K562 (cell line): ENCODE measurements at regions of chr1 and their contacts with region 1.

Region 1: GRCh38 chr1:45521398-45522323 is at the start of gene PRDX1:
- DNase-seq: peak; percentile 97 to 99 (median 98)
- ATAC-seq: peak; percentile 92
- H3K4me3 ChIP-seq: peak within 1 kb of the TSS; percentile 96
- H3K27ac ChIP-seq: peak within 1 kb of the TSS; percentile 87
- H3K4me1 ChIP-seq: peaks cover 25 to 29% of the 10 kb centered on the region in 2 experiments
- H3K27me3 ChIP-seq: no peaks in the 10 kb centered on the region
- CTCF ChIP-seq: peak in 2 of 3 experiments; percentile 38 to 39; a peak in 4 of 6 replicates
- EP300 ChIP-seq: peak; percentile 66; the same call in 1 of the 2 replicates
- POLR2A ChIP-seq: peak; percentile 100
- RAD21 ChIP-seq: peak; percentile 7 to 18
- polyA plus RNA-seq, gene PRDX1: 2,282 to 2,388 TPM

Region 2: GRCh38 chr1:45246760-45247159 is 274.9 kb before region 1 on chr1:
- CTCF ChIA-PET with region 1: no interaction called
- POLR2A ChIA-PET with region 1: no interaction called
- in situ Hi-C with region 1: no loop called
- intact Hi-C with region 1: no loop called
- DNase-seq: no peak
- ATAC-seq: no peak
- H3K4me3 ChIP-seq: no peak overlapping the region
- H3K27ac ChIP-seq: no peak overlapping the region
- H3K4me1 ChIP-seq: no peaks in the 10 kb centered on the region; a peak in 1 of 5 replicates
- H3K27me3 ChIP-seq: peaks cover 2 to 6% of the 10 kb centered on the region in 2 experiments; a peak in 3 of 5 replicates
- CTCF ChIP-seq: no peak
- EP300 ChIP-seq: no peak
- POLR2A ChIP-seq: no peak
- RAD21 ChIP-seq: no peak

Region 3: GRCh38 chr1:45348716-45349677 is 172.7 kb before region 1 on chr1:
- CTCF ChIA-PET with region 1: no interaction called
- POLR2A ChIA-PET with region 1: interaction called, 16 read pairs
- in situ Hi-C with region 1: no loop called
- intact Hi-C with region 1: no loop called
- DNase-seq: no peak
- ATAC-seq: no peak
- H3K4me3 ChIP-seq: no peak overlapping the region
- H3K27ac ChIP-seq: no peak overlapping the region
- H3K4me1 ChIP-seq: peaks cover 4 to 5% of the 10 kb centered on the region in 2 experiments; a peak in 3 of 5 replicates
- H3K27me3 ChIP-seq: no peaks in the 10 kb centered on the region
- CTCF ChIP-seq: no peak
- EP300 ChIP-seq: no peak
- POLR2A ChIP-seq: no peak
- RAD21 ChIP-seq: no peak

Region 4: DNA sequence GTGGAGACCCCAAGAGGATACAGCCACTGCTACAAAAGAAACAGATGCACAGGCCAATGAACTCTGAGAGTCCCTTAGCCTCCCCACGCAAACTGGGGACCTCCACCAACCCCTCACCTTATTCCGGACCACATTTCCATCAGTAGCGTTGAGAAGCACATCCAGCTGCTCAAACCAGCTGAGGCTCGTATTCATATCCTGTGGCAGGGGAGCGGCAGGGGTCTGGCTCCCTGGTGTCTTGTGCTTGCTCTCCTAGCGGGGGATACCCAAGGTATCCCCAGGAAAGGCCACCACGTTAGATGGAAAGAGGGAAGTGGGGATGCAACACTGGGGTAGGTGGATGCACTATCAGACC is 22.3 kb before region 1 on chr1:
- CTCF ChIA-PET with region 1: no interaction called
- POLR2A ChIA-PET with region 1: interaction called, 79 read pairs
- in situ Hi-C with region 1: no loop called
- intact Hi-C with region 1: no loop called
- DNase-seq: peak in 1 of 4 experiments; percentile 55
- ATAC-seq: peak; percentile 3
- H3K4me3 ChIP-seq: peak overlapping the region; percentile 44
- H3K27ac ChIP-seq: peak overlapping the region; percentile 56; the same call in 2 of the 3 replicates
- H3K4me1 ChIP-seq: peaks cover 18 to 19% of the 10 kb centered on the region in 2 experiments; a peak in 4 of 5 replicates
- H3K27me3 ChIP-seq: no peaks in the 10 kb centered on the region
- CTCF ChIP-seq: 0 out of 6 replicates have a peak, but pooled peaks of 1 of the 3 experiments have one; percentile 7
- EP300 ChIP-seq: no peak
- POLR2A ChIP-seq: no peak
- RAD21 ChIP-seq: no peak

Region 5: GRCh38 chr1:45543581-45544417 is 22.1 kb after region 1 on chr1:
- CTCF ChIA-PET with region 1: no interaction called
- POLR2A ChIA-PET with region 1: interaction called, 135 read pairs
- in situ Hi-C with region 1: no loop called
- intact Hi-C with region 1: no loop called
- DNase-seq: peak in 1 of 4 experiments; percentile 31
- ATAC-seq: peak; percentile 41
- H3K4me3 ChIP-seq: no peak overlapping the region
- H3K27ac ChIP-seq: no peak overlapping the region
- H3K4me1 ChIP-seq: peaks cover 8 to 16% of the 10 kb centered on the region in 2 experiments
- H3K27me3 ChIP-seq: no peaks in the 10 kb centered on the region
- CTCF ChIP-seq: no peak
- EP300 ChIP-seq: no peak
- POLR2A ChIP-seq: no peak
- RAD21 ChIP-seq: no peak

Region 6: GRCh38 chr1:45557422-45557944 is 35.8 kb after region 1 on chr1:
- CTCF ChIA-PET with region 1: interaction called, 4 read pairs
- POLR2A ChIA-PET with region 1: interaction called, 83 read pairs
- in situ Hi-C with region 1: no loop called
- intact Hi-C with region 1: no loop called
- DNase-seq: peak in 1 of 4 experiments; percentile 6
- ATAC-seq: no peak
- H3K4me3 ChIP-seq: no peak overlapping the region
- H3K27ac ChIP-seq: 0 out of 3 replicates have a peak overlapping the region, but pooled peaks have one; percentile 34
- H3K4me1 ChIP-seq: peaks cover 0 to under 1% of the 10 kb centered on the region in 2 experiments; a peak in 1 of 5 replicates
- H3K27me3 ChIP-seq: no peaks in the 10 kb centered on the region
- CTCF ChIP-seq: no peak
- EP300 ChIP-seq: no peak
- POLR2A ChIP-seq: no peak
- RAD21 ChIP-seq: no peak

Region 7: GRCh38 chr1:45589861-45590260 is 68.2 kb after region 1 on chr1:
- CTCF ChIA-PET with region 1: no interaction called
- POLR2A ChIA-PET with region 1: interaction called, 142 read pairs
- in situ Hi-C with region 1: no loop called
- intact Hi-C with region 1: no loop called
- DNase-seq: no peak
- ATAC-seq: no peak
- H3K4me3 ChIP-seq: no peak overlapping the region
- H3K27ac ChIP-seq: no peak overlapping the region
- H3K4me1 ChIP-seq: peaks cover 6 to 27% of the 10 kb centered on the region in 2 experiments; a peak in 4 of 5 replicates
- H3K27me3 ChIP-seq: no peaks in the 10 kb centered on the region
- CTCF ChIP-seq: no peak
- EP300 ChIP-seq: no peak
- POLR2A ChIP-seq: no peak
- RAD21 ChIP-seq: no peak

Region 8: DNA sequence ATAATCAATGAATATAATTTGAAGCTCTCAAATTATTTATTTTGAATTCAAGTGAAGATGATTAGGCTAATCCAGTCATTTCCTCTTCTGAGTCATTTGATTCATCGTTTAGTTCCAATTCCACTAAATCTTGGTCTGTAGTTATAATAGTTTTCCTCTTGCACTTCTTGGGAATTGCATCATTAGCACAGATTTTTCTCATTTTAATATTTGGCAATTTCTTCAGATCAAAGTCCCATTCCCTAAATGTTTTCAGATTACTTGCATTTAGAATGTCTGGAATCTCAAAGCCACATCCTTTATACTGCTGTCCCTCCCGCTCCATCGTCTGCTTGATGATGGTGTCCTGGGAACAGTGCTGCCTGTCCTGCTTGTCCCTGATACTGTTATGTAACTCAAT is 325.3 kb after region 1 on chr1:
- CTCF ChIA-PET with region 1: no interaction called
- POLR2A ChIA-PET with region 1: no interaction called
- in situ Hi-C with region 1: no loop called
- intact Hi-C with region 1: no loop called
- DNase-seq: no peak
- ATAC-seq: no peak
- H3K4me3 ChIP-seq: no peak overlapping the region
- H3K27ac ChIP-seq: no peak overlapping the region
- H3K4me1 ChIP-seq: peaks cover 0 to 3% of the 10 kb centered on the region in 2 experiments; a peak in 1 of 5 replicates
- H3K27me3 ChIP-seq: no peaks in the 10 kb centered on the region
- CTCF ChIP-seq: no peak
- EP300 ChIP-seq: no peak
- POLR2A ChIP-seq: no peak
- RAD21 ChIP-seq: no peak